GM10248 (cell line): ENCODE measurements at regions of chr1 and their contacts with region 1.

Region 1: GRCh38 chr1:184805667-184806295 is 51.1 kb upstream of the EDEM3 start:
- DNase-seq: peak; percentile 79
- CTCF ChIP-seq: peak; percentile 98

Region 2: GRCh38 chr1:184792450-184792969 is 13.3 kb before region 1 on chr1:
- CTCF ChIA-PET with region 1: interaction called, 37 read pairs
- POLR2A ChIA-PET with region 1: no interaction called
- DNase-seq: no peak
- CTCF ChIP-seq: no peak

Region 3: DNA sequence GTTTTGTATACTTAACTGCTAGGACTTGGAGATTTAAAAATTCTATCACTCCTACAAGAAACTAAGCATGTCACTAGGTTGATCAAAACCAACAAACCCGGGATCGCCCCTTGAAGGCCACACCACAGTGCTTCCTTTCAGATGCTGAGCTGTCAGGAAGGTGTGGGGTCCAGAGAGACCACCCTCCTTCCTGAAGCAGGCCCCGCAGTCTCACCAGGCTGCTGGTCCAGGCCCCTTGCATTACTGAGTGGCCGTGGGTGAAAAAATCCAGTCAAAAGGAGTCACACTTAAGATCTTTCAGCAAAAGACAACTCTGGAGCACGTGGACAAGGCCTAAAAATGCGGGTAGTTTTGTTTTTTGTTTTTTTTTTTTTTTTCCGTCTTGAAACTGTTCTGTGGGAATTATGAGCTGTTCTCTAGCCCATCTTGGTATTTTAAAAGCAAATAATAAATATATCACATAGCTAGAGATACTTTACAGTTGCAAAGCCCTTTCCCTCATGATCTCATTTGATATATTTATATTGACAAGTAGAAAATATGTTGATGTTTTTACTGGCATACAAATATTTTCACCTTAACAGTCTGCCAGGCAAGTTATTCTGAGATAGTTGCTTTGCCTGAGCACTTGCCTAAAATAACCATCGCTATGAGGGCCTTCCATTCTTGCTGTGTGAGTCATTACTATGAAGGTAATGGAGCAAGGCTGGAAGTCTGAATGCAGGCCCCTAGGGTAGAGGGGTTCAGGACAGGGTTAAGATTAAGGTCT is 22.0 kb after region 1 on chr1:
- CTCF ChIA-PET with region 1: interaction called, 42 read pairs
- POLR2A ChIA-PET with region 1: no interaction called
- DNase-seq: no peak
- CTCF ChIP-seq: no peak

Region 4: GRCh38 chr1:184965944-184966860 is 160.4 kb after region 1 on chr1:
- CTCF ChIA-PET with region 1: interaction called, 98 read pairs
- POLR2A ChIA-PET with region 1: no interaction called
- DNase-seq: no peak
- CTCF ChIP-seq: no peak

Region 5: DNA sequence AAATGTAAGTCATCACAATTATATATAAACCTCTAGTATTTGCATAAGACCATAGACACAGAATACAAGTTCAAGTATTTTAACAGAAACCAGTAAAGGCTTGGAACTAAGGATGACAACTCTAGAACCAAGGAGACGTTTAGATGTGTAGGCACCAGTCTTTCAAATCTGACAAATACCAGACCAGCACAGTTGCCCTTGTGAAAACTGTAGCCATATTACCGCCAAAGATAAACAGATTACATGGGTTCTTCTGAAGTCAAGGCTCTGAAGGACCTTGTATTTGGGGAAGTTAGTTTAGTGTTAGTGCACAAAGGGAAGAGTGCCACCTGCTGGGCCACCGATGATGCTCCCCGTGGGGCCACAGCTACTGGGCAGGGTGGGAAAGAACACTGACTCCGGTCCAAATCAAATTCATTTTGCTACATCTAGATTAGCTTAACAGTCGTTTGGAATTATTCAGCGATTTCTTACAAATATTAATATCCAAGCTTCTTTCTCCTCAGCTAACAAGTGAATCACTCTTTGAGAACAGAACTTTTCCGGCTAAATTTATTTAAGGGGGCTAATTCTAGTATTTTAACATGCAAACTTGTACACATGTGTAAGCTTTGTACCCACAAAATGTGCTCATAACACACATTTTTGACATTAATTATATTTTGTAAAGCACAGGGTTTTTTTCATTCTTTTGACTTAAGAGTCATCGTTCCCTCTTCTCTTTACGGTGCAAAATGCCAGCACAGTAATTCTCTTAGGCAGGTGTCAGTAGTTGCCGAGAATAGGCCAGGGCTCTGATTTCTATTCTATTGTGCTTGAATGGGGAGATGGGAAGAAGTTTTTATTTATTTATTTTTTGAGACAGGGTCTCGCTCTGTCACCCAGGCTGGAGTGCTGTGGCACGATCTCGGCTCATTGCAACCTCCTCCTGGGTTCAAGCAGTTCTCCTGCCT is 176.5 kb after region 1 on chr1:
- CTCF ChIA-PET with region 1: interaction called, 269 read pairs
- POLR2A ChIA-PET with region 1: no interaction called
- DNase-seq: peak; percentile 73
- CTCF ChIP-seq: peak; percentile 94